ENCODE measurements at regions of chr14 and their contacts with region 1.

Region 1: GRCh38 chr14:20413045-20413799 is at the start of gene TEP1:
- H3K4me3 Mint-ChIP-seq: peak within 1 kb of the TSS; percentile 95
- H3K27ac Mint-ChIP-seq: peak within 1 kb of the TSS; percentile 92
- H3K4me1 Mint-ChIP-seq: peaks cover 44% of the 10 kb centered on the region
- H3K27me3 Mint-ChIP-seq: no peaks in the 10 kb centered on the region

Region 2: GRCh38 chr14:20343092-20343861 is 69.9 kb before region 1 on chr14 and contains the start of gene PARP2:
- intact Hi-C with region 1: loop called (anchors 10 kb)
- H3K4me3 Mint-ChIP-seq: peak within 1 kb of the TSS; percentile 82
- H3K27ac Mint-ChIP-seq: peak within 1 kb of the TSS; percentile 92
- H3K4me1 Mint-ChIP-seq: peaks cover 7% of the 10 kb centered on the region
- H3K27me3 Mint-ChIP-seq: no peaks in the 10 kb centered on the region

Measured in dendritic cell treated with granulocyte-macrophage colony-stimulating factor and Interleukin-4, amounts not matched to agents 40 ng/mL and 50 ng/mL, for 4 days (primary cell).